ENCODE measurements at regions of chr3 and their contacts with region 1.

Region 1: DNA sequence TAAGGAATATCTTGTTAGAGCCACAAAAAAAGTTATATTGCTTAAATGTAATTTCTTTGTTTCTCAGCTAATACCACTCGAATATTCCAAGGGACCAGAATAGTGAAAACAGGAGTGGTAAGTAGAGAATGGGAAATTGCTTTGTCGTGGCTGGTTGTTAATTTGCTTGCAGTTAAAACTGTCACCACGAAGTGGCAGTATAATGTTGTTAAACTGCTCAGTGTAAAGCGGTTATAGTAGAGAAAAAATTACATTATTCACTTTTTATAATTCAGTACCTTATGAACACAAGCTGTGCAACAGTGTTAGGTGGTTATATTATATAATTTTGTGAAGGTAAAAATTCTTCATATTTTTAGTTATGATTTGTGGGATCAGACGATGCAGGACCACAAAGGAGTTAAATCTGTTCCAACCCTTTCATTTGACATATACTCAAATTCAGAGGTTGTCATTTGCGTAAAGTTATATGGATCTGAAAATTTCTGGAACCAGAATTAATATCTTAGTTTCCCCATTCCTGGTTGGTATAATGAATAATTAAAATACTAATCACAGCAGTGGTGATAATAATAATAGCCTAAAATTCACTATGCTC is 171.8 kb downstream of the FEZF2 start:
- DNase-seq: peak; percentile 65
- H3K4me3 ChIP-seq: no peak overlapping the region; a peak in 1 of 4 replicates
- H3K27ac ChIP-seq: no peak overlapping the region
- H3K4me1 ChIP-seq: no peaks in the 10 kb centered on the region
- H3K27me3 ChIP-seq: no peaks in the 10 kb centered on the region
- CTCF ChIP-seq: peak; percentile 77
- EP300 ChIP-seq: no peak
- RAD21 ChIP-seq: peak; percentile 84

Region 2: GRCh38 chr3:62159709-62160092 is 41.8 kb before region 1 on chr3:
- CTCF ChIA-PET with region 1: no interaction called
- POLR2A ChIA-PET with region 1: no interaction called
- DNase-seq: no peak
- H3K4me3 ChIP-seq: no peak overlapping the region
- H3K27ac ChIP-seq: no peak overlapping the region
- H3K4me1 ChIP-seq: no peaks in the 10 kb centered on the region
- H3K27me3 ChIP-seq: no peaks in the 10 kb centered on the region
- CTCF ChIP-seq: no peak
- EP300 ChIP-seq: no peak
- RAD21 ChIP-seq: no peak

Region 3: GRCh38 chr3:62188681-62189383 is 12.7 kb before region 1 on chr3:
- CTCF ChIA-PET with region 1: interaction called, 24 read pairs
- POLR2A ChIA-PET with region 1: no interaction called
- DNase-seq: peak; percentile 76
- H3K4me3 ChIP-seq: peak overlapping the region in 1 of 2 experiments; percentile 29; a peak in 1 of 4 replicates
- H3K27ac ChIP-seq: no peak overlapping the region
- H3K4me1 ChIP-seq: peaks cover 0 to 4% of the 10 kb centered on the region in 2 experiments; a peak in 1 of 4 replicates
- H3K27me3 ChIP-seq: no peaks in the 10 kb centered on the region
- CTCF ChIP-seq: peak; percentile 87
- EP300 ChIP-seq: no peak
- RAD21 ChIP-seq: peak; percentile 87

Region 4: GRCh38 chr3:62277450-62277849 is 75.9 kb after region 1 on chr3:
- CTCF ChIA-PET with region 1: interaction called, 13 read pairs
- POLR2A ChIA-PET with region 1: no interaction called
- DNase-seq: peak; percentile 35
- H3K4me3 ChIP-seq: no peak overlapping the region
- H3K27ac ChIP-seq: no peak overlapping the region
- H3K4me1 ChIP-seq: peaks cover 0 to 4% of the 10 kb centered on the region in 2 experiments; a peak in 1 of 4 replicates
- H3K27me3 ChIP-seq: no peaks in the 10 kb centered on the region
- CTCF ChIP-seq: no peak
- EP300 ChIP-seq: peak in 1 of 2 experiments; percentile 81; a peak in 2 of 4 replicates
- RAD21 ChIP-seq: no peak

Region 5: DNA sequence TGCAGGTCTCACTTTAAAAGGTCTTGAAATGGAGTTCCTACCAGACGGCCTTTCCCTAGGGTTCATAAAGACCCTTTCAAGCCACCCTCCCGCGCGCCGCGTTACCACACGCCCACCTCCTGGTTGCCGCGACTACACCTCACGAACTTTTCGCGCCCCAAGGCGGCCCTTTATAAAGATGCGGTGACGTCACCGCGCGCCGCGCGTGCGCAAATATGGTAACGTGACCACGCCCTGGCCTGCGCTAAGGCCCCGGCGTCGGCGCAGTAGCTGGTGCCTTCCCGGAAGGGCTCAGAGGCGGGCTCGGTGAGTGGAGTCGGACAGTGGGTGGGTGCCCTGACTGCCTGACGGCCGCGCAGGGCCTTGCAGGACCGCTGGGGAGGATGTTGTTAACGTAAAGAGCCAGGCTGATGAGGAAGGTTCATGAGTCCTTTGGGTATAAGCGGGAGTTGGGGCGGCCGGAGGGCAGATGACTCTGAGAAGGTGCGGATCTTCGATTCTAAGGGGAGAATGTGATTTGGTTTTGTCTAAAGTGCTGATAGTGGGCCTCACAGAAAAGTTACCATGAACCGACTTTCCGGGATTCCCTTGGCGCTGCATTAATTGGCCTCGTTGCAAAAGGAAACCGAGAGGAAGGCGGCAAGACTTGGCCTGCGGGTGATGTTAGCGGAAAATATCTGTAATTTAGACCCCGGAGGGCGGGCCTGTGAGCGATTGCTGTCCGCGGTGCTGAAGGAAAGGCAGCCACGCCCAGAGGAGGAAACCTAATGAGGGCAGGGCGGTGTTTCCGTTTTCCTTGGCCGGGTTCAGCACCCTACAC is 117.4 kb after region 1 on chr3:
- CTCF ChIA-PET with region 1: interaction called, 38 read pairs
- POLR2A ChIA-PET with region 1: interaction called, 3 read pairs
- DNase-seq: peak; percentile 90
- H3K4me3 ChIP-seq: peak overlapping the region; percentile 85 to 87
- H3K27ac ChIP-seq: peak overlapping the region; percentile 62 to 86
- H3K4me1 ChIP-seq: peaks cover 0 to 10% of the 10 kb centered on the region in 2 experiments; a peak in 2 of 4 replicates
- H3K27me3 ChIP-seq: no peaks in the 10 kb centered on the region
- CTCF ChIP-seq: no peak
- EP300 ChIP-seq: no peak
- RAD21 ChIP-seq: no peak

Region 6: GRCh38 chr3:62558549-62559112 is 357.1 kb after region 1 on chr3:
- CTCF ChIA-PET with region 1: interaction called, 45 read pairs
- POLR2A ChIA-PET with region 1: no interaction called
- DNase-seq: peak; percentile 53
- H3K4me3 ChIP-seq: no peak overlapping the region; a peak in 1 of 4 replicates
- H3K27ac ChIP-seq: no peak overlapping the region
- H3K4me1 ChIP-seq: peaks cover 0 to 10% of the 10 kb centered on the region in 2 experiments; a peak in 3 of 4 replicates
- H3K27me3 ChIP-seq: no peaks in the 10 kb centered on the region
- CTCF ChIP-seq: peak; percentile 69
- EP300 ChIP-seq: no peak
- RAD21 ChIP-seq: peak; percentile 82

Measured in SK-N-SH (cell line).